ENCODE measurements at regions of chr15 and their contacts with region 1.

Region 1: DNA sequence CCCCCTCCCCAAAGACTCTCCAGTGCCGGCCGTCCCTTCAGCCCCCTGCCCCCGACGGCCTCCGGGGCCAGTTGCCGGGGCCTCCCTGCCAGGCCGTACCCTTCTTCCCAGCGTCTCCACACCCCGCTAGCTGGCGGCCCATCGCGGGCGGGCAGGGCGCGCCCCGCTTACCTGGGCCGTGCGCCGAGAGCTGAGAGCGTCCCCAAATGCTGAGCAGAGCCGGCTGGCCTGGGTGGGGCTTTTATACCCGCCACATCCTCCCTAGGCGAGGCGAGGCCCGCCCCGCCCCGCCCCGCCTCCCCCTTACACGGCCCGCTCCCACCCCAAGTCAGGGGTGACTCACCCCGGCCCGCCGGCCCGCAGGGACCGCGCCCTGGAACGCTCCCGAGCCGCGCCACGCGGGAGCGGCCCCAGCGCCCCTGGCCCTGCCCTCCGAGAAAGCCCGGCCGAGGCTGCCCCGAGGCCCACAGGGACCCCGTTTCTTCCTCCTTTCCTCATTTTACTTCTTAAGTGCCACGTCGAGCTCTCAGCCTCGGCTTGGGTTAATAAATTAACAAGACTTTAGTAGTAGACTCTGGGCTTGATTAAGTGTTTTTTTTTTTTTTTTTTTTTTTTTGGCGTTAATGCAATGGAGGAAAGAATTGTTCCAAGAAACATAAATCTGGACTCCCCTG is at the start of gene ANXA2:
- DNase-seq: peak; percentile 84
- ATAC-seq: peak; percentile 42
- H3K4me3 ChIP-seq: peak within 1 kb of the TSS; percentile 70
- H3K27ac ChIP-seq: peak within 1 kb of the TSS; percentile 96
- H3K4me1 ChIP-seq: peaks cover 44% of the 10 kb centered on the region
- H3K27me3 ChIP-seq: no peaks in the 10 kb centered on the region
- CTCF ChIP-seq: no peak
- POLR2A ChIP-seq: peak; percentile 95
- RAD21 ChIP-seq: no peak
- total RNA-seq, gene ANXA2: 6,979 and 8,412 TPM in 2 replicates

Region 2: DNA sequence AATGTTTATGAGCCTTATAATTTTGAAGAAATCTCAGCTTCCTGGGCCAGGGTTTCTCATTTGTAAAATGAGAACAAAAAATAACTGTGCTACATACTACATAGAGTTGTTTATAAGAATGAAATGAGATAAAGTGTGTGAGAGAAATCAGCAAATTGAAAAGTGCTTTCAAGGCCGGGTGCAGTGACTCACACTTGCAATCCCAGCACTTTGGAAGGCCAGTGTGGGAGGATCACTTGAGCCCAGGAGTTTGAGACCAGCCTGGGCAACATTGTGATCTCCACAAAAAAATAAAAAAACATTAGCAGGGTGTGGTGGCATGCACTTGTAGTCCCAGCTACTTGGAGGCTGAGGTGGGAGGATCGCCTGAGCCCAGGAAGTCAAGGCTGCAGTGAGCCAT is 371.4 kb before region 1 on chr15:
- CTCF ChIA-PET with region 1: no interaction called
- POLR2A ChIA-PET with region 1: no interaction called
- dilution Hi-C with region 1: no loop called
- in situ Hi-C with region 1: no loop called
- intact Hi-C with region 1: no loop called
- DNase-seq: no peak
- ATAC-seq: no peak
- H3K4me3 ChIP-seq: no peak overlapping the region
- H3K27ac ChIP-seq: no peak overlapping the region
- H3K4me1 ChIP-seq: no peaks in the 10 kb centered on the region
- H3K27me3 ChIP-seq: peaks cover 3% of the 10 kb centered on the region
- CTCF ChIP-seq: no peak
- POLR2A ChIP-seq: no peak
- RAD21 ChIP-seq: no peak

Region 3: GRCh38 chr15:60340207-60340921 is 57.5 kb before region 1 on chr15:
- CTCF ChIA-PET with region 1: no interaction called
- POLR2A ChIA-PET with region 1: interaction called, 13 read pairs
- dilution Hi-C with region 1: no loop called
- in situ Hi-C with region 1: no loop called
- intact Hi-C with region 1: no loop called
- DNase-seq: no peak
- ATAC-seq: peak; percentile 31
- H3K4me3 ChIP-seq: no peak overlapping the region
- H3K27ac ChIP-seq: no peak overlapping the region
- H3K4me1 ChIP-seq: no peaks in the 10 kb centered on the region; the same call in 1 of the 2 replicates
- H3K27me3 ChIP-seq: no peaks in the 10 kb centered on the region
- CTCF ChIP-seq: 0 out of 2 replicates have a peak, but pooled peaks have one; percentile 13
- POLR2A ChIP-seq: no peak
- RAD21 ChIP-seq: no peak

Region 4: GRCh38 chr15:60362321-60363086 is 35.4 kb before region 1 on chr15:
- CTCF ChIA-PET with region 1: interaction called, 3 read pairs
- POLR2A ChIA-PET with region 1: interaction called, 3 read pairs
- dilution Hi-C with region 1: no loop called
- in situ Hi-C with region 1: no loop called
- intact Hi-C with region 1: loop called (anchors 2 kb)
- DNase-seq: peak; percentile 78
- ATAC-seq: peak; percentile 36
- H3K4me3 ChIP-seq: no peak overlapping the region
- H3K27ac ChIP-seq: peak overlapping the region; percentile 71; the same call in 1 of the 2 replicates
- H3K4me1 ChIP-seq: peaks cover 28% of the 10 kb centered on the region
- H3K27me3 ChIP-seq: no peaks in the 10 kb centered on the region
- CTCF ChIP-seq: no peak
- POLR2A ChIP-seq: no peak
- RAD21 ChIP-seq: no peak

Region 5: DNA sequence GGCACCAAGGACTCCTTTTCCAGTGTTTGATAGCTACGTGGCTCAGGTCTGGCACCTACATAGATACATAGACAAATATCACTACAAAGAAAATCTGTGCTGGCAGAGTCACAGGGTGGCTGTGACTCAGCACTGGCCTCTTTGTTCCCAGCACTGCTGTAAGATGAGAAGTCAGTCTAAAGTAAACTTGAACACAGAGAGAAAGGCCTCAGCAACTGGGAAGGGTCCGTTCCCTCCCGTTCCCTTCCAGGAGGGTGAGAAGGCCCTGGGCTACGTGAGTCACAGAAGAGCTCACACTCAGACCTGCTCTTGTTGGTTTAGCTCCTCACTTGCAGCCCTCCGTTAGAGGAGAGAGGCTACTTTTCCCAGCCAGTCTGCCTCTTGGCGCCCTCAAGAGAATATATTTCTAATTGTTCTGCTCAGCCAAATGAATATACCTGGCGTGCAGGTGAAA is 23.3 kb before region 1 on chr15:
- CTCF ChIA-PET with region 1: no interaction called
- POLR2A ChIA-PET with region 1: interaction called, 3 read pairs
- dilution Hi-C with region 1: no loop called
- in situ Hi-C with region 1: no loop called
- intact Hi-C with region 1: loop called (anchors 2 kb)
- DNase-seq: peak; percentile 99
- ATAC-seq: peak; percentile 66
- H3K4me3 ChIP-seq: no peak overlapping the region
- H3K27ac ChIP-seq: peak overlapping the region; percentile 55; the same call in 1 of the 2 replicates
- H3K4me1 ChIP-seq: peaks cover 45% of the 10 kb centered on the region
- H3K27me3 ChIP-seq: no peaks in the 10 kb centered on the region
- CTCF ChIP-seq: no peak; the same call in 1 of the 2 replicates
- POLR2A ChIP-seq: peak; percentile 84; the same call in 1 of the 2 replicates
- RAD21 ChIP-seq: peak; percentile 21; the same call in 1 of the 2 replicates

Region 6: DNA sequence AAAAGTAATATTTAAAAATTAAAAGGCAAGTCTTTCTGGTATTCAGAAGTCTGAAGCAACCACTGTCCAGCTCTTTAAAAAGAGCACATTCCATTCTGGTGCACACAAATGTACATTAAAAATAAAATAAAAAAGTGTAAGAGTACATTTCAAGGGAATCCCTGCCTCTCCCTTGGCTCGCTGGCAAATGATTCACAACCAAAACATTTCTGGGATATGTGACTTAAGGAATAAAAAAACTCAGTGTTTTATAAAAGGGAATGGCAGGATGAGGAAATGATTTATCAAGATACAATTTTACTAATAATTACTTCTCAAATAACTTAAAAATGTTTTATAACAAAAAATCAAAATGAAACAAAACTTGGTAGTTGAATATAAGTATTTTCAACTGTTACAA is 23.6 kb after region 1 on chr15:
- CTCF ChIA-PET with region 1: interaction called, 5 read pairs
- POLR2A ChIA-PET with region 1: interaction called, 4 read pairs
- dilution Hi-C with region 1: no loop called
- in situ Hi-C with region 1: no loop called
- intact Hi-C with region 1: loop called (anchors 1 kb)
- DNase-seq: peak; percentile 89
- ATAC-seq: peak; percentile 74
- H3K4me3 ChIP-seq: no peak overlapping the region
- H3K27ac ChIP-seq: no peak overlapping the region
- H3K4me1 ChIP-seq: peaks cover 5% of the 10 kb centered on the region
- H3K27me3 ChIP-seq: no peaks in the 10 kb centered on the region
- CTCF ChIP-seq: no peak
- POLR2A ChIP-seq: no peak
- RAD21 ChIP-seq: no peak

Region 7: GRCh38 chr15:60444289-60444912 is 46.5 kb after region 1 on chr15:
- CTCF ChIA-PET with region 1: interaction called, 3 read pairs
- POLR2A ChIA-PET with region 1: no interaction called
- dilution Hi-C with region 1: no loop called
- in situ Hi-C with region 1: no loop called
- intact Hi-C with region 1: loop called (anchors 1 kb)
- DNase-seq: peak; percentile 51
- ATAC-seq: peak; percentile 59
- H3K4me3 ChIP-seq: no peak overlapping the region
- H3K27ac ChIP-seq: no peak overlapping the region
- H3K4me1 ChIP-seq: peaks cover 2% of the 10 kb centered on the region
- H3K27me3 ChIP-seq: no peaks in the 10 kb centered on the region
- CTCF ChIP-seq: peak; percentile 76
- POLR2A ChIP-seq: no peak
- RAD21 ChIP-seq: peak; percentile 76

Region 8: GRCh38 chr15:60568301-60568742 is 170.4 kb after region 1 on chr15:
- CTCF ChIA-PET with region 1: no interaction called
- POLR2A ChIA-PET with region 1: no interaction called
- dilution Hi-C with region 1: no loop called
- in situ Hi-C with region 1: no loop called
- intact Hi-C with region 1: no loop called
- DNase-seq: no peak
- ATAC-seq: no peak
- H3K4me3 ChIP-seq: no peak overlapping the region
- H3K27ac ChIP-seq: no peak overlapping the region
- H3K4me1 ChIP-seq: peaks cover 8% of the 10 kb centered on the region
- H3K27me3 ChIP-seq: no peaks in the 10 kb centered on the region
- CTCF ChIP-seq: no peak
- POLR2A ChIP-seq: no peak
- RAD21 ChIP-seq: no peak

Measured in IMR-90 (cell line).